GM10248 (cell line): ENCODE measurements at regions of chr2 and their contacts with region 1.

Region 1: GRCh38 chr2:224894356-224894755 is 147.9 kb downstream of the DOCK10 start:
- DNase-seq: peak; percentile 41
- CTCF ChIP-seq: no peak

Region 2: GRCh38 chr2:224221455-224221913 is 672.9 kb before region 1 on chr2:
- CTCF ChIA-PET with region 1: no interaction called
- POLR2A ChIA-PET with region 1: no interaction called
- DNase-seq: no peak
- CTCF ChIP-seq: no peak

Region 3: GRCh38 chr2:224837558-224837957 is 56.8 kb before region 1 on chr2:
- CTCF ChIA-PET with region 1: no interaction called
- POLR2A ChIA-PET with region 1: no interaction called
- DNase-seq: no peak
- CTCF ChIP-seq: no peak

Region 4: DNA sequence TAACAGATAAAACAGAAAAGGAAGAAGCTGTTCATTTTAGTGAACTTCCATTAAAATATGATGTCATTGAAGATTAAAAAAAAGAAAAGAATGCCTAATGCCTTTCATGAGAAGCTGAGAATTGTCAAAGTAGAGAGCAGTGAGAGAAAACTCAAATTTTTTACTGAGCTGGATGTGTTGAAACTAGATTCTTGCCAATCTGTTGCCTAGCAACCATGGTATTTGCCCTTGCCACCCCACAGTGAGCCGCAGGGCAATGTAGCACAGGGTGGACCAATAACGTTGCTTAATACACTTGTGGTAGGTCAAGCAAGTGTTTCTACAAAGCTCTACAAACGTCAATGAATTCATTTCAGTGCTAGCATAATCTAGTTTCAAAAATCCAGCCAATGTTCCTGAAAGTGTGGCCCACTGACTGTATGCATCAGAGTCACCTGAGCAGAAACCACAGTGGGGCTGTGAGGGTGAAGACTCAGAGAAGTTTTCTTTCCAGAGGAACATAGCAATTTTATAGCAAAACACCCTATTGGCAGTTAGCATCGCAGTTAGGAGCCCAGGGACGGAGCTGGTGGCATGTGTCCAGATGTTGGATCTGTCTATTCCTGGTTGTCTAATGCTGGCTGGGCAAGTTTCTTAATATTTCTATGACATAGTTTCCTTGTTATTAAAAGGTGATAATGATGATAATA is 15.7 kb after region 1 on chr2:
- CTCF ChIA-PET with region 1: interaction called, 11 read pairs
- POLR2A ChIA-PET with region 1: no interaction called
- DNase-seq: no peak
- CTCF ChIP-seq: no peak

Region 5: DNA sequence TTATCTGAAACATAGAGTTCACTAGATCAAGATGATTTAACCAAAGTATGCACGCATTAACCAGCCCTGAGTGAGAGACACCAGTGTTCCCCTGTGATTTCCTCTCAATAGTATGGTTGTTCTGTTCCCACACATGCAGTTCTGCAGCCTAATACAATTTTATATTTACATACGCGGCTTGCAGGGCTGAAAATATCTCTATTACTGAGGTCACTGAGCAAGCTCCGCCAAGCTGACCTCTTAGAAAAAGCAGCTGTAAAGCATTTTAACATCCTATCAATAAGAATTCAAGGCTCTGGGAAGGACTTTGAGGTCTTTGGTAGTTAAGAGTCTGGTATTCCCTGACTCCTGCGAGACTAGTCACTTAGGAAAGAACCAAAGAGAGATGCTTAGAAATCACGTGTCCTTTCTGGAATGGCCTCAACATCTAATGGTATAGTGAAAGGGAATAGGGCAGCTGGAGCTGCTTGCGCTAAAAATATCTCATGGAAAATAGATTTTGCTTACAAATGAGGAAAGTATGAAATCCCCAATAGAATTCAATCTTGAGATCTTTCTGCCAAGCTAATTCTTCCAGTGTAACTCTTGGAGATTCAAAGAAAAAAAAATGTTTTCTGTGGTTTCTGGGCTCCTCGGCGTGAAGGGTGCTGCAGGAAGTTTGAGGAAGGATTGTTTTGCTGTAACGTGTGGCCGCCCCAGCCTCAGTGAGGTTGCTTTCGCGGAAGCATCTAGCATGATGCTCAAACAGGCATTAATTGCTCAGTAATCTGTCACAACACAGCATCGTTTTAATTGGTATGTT is 88.8 kb after region 1 on chr2:
- CTCF ChIA-PET with region 1: no interaction called
- POLR2A ChIA-PET with region 1: no interaction called
- DNase-seq: no peak
- CTCF ChIP-seq: no peak